H1 (cell line): ENCODE measurements at regions of chr19 and their contacts with region 1.

Region 1: GRCh38 chr19:19900729-19901444 is at the start of gene ZNF93:
- DNase-seq: peak; percentile 92 to 95
- H3K4me3 ChIP-seq: peak within 1 kb of the TSS; percentile 90 to 95 (median 94)
- H3K27ac ChIP-seq: peak within 1 kb of the TSS; percentile 98
- H3K4me1 ChIP-seq: peaks cover 0 to 6% (median 2%) of the 10 kb centered on the region in 4 experiments; a peak in 4 of 7 replicates
- H3K27me3 ChIP-seq: no peaks in the 10 kb centered on the region
- CTCF ChIP-seq: no peak
- EP300 ChIP-seq: no peak
- POLR2A ChIP-seq: peak; percentile 92 to 98
- RAD21 ChIP-seq: no peak
- total RNA-seq, gene ZNF93: 61.1 and 61.8 TPM in 2 replicates

Region 2: GRCh38 chr19:19821366-19821951 is 79.4 kb before region 1 on chr19 and contains the start of gene ZNF506:
- CTCF ChIA-PET with region 1: no interaction called
- POLR2A ChIA-PET with region 1: interaction called, 15 read pairs
- DNase-seq: peak; percentile 79 to 82
- H3K4me3 ChIP-seq: peak within 1 kb of the TSS; percentile 94 to 100 (median 99)
- H3K27ac ChIP-seq: peak within 1 kb of the TSS; percentile 94
- H3K4me1 ChIP-seq: no peaks in the 10 kb centered on the region
- H3K27me3 ChIP-seq: no peaks in the 10 kb centered on the region
- CTCF ChIP-seq: no peak
- EP300 ChIP-seq: no peak
- POLR2A ChIP-seq: peak; percentile 82 to 92
- RAD21 ChIP-seq: no peak
- total RNA-seq, gene ZNF506: 8.0 and 8.3 TPM in 2 replicates

Region 3: GRCh38 chr19:19865739-19866481 is 35.0 kb before region 1 on chr19 and contains the start of gene ZNF253:
- CTCF ChIA-PET with region 1: interaction called, 4 read pairs
- POLR2A ChIA-PET with region 1: interaction called, 453 read pairs
- DNase-seq: peak; percentile 91 to 97
- H3K4me3 ChIP-seq: peak within 1 kb of the TSS; percentile 84 to 99 (median 90)
- H3K27ac ChIP-seq: peak within 1 kb of the TSS; percentile 100
- H3K4me1 ChIP-seq: peaks cover 0 to 3% (median 1%) of the 10 kb centered on the region in 4 experiments; a peak in 2 of 7 replicates
- H3K27me3 ChIP-seq: no peaks in the 10 kb centered on the region
- CTCF ChIP-seq: no peak; a peak in 1 of 4 replicates
- EP300 ChIP-seq: no peak
- POLR2A ChIP-seq: peak; percentile 99 to 100
- RAD21 ChIP-seq: 0 out of 4 replicates have a peak, but pooled peaks of 1 of the 2 experiments have one; percentile 4
- total RNA-seq, gene ZNF253: 64.0 and 74.6 TPM in 2 replicates

Region 4: GRCh38 chr19:19911150-19911549 is 10.3 kb after region 1 on chr19:
- CTCF ChIA-PET with region 1: interaction called, 6 read pairs
- POLR2A ChIA-PET with region 1: interaction called, 127 read pairs
- DNase-seq: no peak
- H3K4me3 ChIP-seq: no peak overlapping the region
- H3K27ac ChIP-seq: no peak overlapping the region
- H3K4me1 ChIP-seq: peaks cover 0 to 2% (median 0%) of the 10 kb centered on the region in 4 experiments; a peak in 1 of 7 replicates
- H3K27me3 ChIP-seq: no peaks in the 10 kb centered on the region
- CTCF ChIP-seq: no peak
- EP300 ChIP-seq: no peak
- POLR2A ChIP-seq: peak in 1 of 2 experiments; percentile 54; a peak in 1 of 3 replicates
- RAD21 ChIP-seq: no peak